ENCODE measurements at regions of chr19 and their contacts with region 1.

Region 1: DNA sequence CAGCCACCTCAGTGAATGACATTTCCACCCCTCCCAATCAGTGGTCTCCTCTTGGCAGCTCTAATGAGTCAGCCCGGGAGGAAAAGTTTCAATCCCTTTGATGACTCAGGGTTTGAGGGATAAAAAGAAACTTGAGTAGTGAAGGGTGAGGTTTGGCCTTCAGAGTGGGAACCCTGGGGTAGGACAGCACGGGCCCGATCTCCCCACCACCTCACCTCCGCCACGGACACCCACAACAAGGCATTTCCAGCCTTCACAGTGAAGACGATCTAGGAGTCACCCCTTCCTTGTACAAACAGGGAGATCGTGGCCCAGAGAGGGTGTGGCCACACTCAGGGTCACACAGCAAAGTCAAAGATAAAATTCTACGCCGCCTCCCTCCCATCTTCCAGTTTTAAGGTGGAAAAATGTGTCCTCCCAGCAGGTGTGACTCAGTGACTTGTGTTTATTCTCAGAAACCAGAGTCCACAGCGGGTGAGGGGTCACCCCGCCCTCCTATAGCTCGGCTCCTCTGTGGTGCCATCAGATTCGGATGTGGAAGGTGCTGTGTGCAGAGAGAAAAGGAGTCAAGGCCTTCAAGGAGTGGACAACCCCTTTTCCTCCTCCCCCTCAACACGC is 12.3 kb downstream of the CIB3 start:
- DNase-seq: peak; percentile 45
- H3K4me3 ChIP-seq: no peak overlapping the region
- H3K27ac ChIP-seq: no peak overlapping the region
- H3K4me1 ChIP-seq: no peaks in the 10 kb centered on the region
- H3K27me3 ChIP-seq: no peaks in the 10 kb centered on the region
- CTCF ChIP-seq: no peak

Region 2: DNA sequence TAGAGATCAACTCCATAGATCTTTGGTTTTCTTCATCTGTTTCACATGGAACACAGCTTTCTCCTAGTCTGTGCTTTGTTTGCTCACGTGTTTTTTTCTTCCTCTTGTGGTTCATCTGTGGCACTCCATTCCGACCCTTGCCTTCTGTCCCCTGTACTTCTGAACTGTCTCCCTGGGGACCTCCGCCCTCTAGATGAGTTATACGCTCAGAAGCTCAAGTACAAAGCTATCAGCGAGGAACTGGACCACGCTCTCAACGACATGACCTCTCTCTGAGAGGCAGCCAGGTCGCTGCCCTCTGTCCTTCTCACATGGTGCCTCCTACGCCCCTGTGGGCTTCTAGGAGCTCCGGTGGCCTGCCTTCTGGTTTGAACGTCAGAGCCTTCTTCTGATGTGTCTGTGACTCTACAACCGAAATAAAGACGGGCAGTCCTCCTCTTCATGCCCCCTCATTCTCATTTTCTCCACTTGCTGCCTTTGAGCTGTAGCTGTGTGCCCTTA is 65.9 kb before region 1 on chr19:
- CTCF ChIA-PET with region 1: interaction called, 12 read pairs
- POLR2A ChIA-PET with region 1: interaction called, 10 read pairs
- intact Hi-C with region 1: no loop called
- DNase-seq: no peak
- H3K4me3 ChIP-seq: no peak overlapping the region
- H3K27ac ChIP-seq: no peak overlapping the region
- H3K4me1 ChIP-seq: no peaks in the 10 kb centered on the region
- H3K27me3 ChIP-seq: no peaks in the 10 kb centered on the region
- CTCF ChIP-seq: no peak

Region 3: GRCh38 chr19:16106121-16106520 is 54.9 kb before region 1 on chr19:
- CTCF ChIA-PET with region 1: no interaction called
- POLR2A ChIA-PET with region 1: no interaction called
- intact Hi-C with region 1: no loop called
- DNase-seq: no peak
- H3K4me3 ChIP-seq: no peak overlapping the region
- H3K27ac ChIP-seq: no peak overlapping the region
- H3K4me1 ChIP-seq: peaks cover 5% of the 10 kb centered on the region
- H3K27me3 ChIP-seq: no peaks in the 10 kb centered on the region
- CTCF ChIP-seq: no peak

Region 4: DNA sequence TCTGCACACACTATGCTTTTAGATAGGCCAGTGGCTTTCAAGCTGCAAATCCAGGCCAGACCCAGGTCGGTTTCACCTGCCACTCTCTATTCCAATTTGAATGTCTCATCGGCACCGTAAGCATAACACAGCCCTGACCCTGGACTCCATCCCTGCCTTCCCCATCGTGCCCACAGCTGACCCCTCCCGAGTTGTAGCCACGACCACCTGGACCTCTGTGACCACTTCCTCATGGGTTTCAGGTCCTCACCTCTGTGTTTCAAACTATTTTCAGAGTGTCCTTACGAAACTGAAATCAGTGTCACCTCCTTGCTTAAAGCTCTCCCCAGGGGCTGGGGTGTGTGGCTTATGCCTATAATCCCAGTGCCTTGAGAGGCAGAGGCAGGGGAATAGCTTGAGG is 26.5 kb before region 1 on chr19:
- CTCF ChIA-PET with region 1: no interaction called
- POLR2A ChIA-PET with region 1: interaction called, 13 read pairs
- intact Hi-C with region 1: no loop called
- DNase-seq: no peak
- H3K4me3 ChIP-seq: no peak overlapping the region
- H3K27ac ChIP-seq: no peak overlapping the region
- H3K4me1 ChIP-seq: no peaks in the 10 kb centered on the region
- H3K27me3 ChIP-seq: no peaks in the 10 kb centered on the region
- CTCF ChIP-seq: no peak

Region 5: DNA sequence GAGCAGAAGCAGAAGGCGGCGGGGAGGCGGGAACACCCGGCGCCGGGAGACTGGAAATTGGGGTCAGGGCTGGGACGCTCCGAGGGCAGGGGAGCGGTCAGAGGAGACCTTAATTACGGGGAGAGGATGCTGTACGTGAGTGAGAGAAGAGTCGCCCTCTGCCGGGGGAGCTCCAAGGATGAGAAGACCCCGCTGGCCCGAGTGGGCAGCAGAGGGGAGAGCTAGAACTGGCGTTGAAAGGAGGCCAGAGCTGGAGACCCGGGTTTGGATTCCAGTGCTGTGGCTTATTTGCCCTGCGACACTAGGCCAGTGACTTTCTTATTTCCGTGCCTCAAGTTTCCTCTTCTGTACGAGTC is 24.7 kb after region 1 on chr19:
- CTCF ChIA-PET with region 1: no interaction called
- POLR2A ChIA-PET with region 1: no interaction called
- intact Hi-C with region 1: no loop called
- DNase-seq: peak; percentile 39
- H3K4me3 ChIP-seq: peak overlapping the region; percentile 94
- H3K27ac ChIP-seq: peak overlapping the region; percentile 87
- H3K4me1 ChIP-seq: peaks cover 4% of the 10 kb centered on the region
- H3K27me3 ChIP-seq: no peaks in the 10 kb centered on the region
- CTCF ChIP-seq: peak; percentile 48

Region 6: DNA sequence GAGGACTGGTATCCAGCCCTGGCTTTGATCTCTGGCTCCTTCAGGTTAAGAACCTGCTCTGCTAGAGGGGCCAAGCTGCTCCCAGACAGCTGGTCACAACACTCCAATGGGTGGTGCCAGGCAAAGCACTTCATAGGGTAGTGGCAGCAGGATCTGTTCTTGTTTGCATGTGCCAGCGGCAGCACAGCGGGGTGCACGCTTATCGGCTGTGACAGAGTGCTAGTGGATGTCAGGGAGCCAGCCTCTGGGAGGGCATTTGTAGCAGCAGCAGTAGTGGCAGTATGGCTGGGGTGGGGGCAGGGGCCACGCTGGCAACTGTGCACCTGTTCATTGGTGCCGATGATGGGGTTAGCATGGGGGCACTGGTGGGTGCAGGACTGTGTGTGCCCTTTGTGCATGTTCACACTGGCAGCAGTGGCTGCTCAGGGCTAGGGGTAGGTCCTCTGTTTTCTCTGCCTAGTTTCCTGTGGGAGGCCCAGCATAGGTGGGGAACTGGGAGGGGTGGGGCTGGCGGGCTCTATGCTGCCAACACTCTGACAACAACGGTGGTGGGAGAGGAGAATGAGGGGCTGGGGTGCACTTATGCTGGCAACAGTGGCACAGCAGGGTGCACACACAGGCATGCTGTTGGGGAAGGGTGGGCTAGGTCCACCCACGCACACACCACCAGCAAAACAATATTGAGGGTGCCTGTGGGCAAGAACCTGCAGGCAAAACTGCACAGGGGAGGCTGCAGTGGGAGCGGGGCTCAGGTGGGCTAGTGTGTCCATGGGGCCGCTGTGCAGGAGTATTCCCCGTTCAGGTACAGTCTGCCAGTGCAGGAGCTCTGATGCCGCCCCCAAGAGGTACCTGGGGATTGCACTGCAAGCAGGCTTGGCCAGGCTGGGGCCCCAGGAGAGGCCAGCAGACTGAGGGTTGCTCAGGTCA is 56.0 kb after region 1 on chr19:
- CTCF ChIA-PET with region 1: interaction called, 13 read pairs
- POLR2A ChIA-PET with region 1: no interaction called
- intact Hi-C with region 1: no loop called
- DNase-seq: no peak
- H3K4me3 ChIP-seq: no peak overlapping the region
- H3K27ac ChIP-seq: no peak overlapping the region
- H3K4me1 ChIP-seq: no peaks in the 10 kb centered on the region
- H3K27me3 ChIP-seq: no peaks in the 10 kb centered on the region
- CTCF ChIP-seq: no peak